ENCODE measurements at regions of chr5 and their contacts with region 1.

Region 1: GRCh38 chr5:158174918-158175851 is 316.2 kb upstream of the CLINT1 start:
- DNase-seq: peak; percentile 81 to 85
- ATAC-seq: peak; percentile 87
- H3K4me3 ChIP-seq: no peak overlapping the region
- H3K27ac ChIP-seq: no peak overlapping the region
- H3K4me1 ChIP-seq: no peaks in the 10 kb centered on the region
- H3K27me3 ChIP-seq: no peaks in the 10 kb centered on the region

Region 2: GRCh38 chr5:158268286-158268685 is 93.1 kb after region 1 on chr5:
- intact Hi-C with region 1: no loop called
- DNase-seq: no peak
- ATAC-seq: no peak
- H3K4me3 ChIP-seq: no peak overlapping the region
- H3K27ac ChIP-seq: no peak overlapping the region
- H3K4me1 ChIP-seq: no peaks in the 10 kb centered on the region
- H3K27me3 ChIP-seq: no peaks in the 10 kb centered on the region

Region 3: DNA sequence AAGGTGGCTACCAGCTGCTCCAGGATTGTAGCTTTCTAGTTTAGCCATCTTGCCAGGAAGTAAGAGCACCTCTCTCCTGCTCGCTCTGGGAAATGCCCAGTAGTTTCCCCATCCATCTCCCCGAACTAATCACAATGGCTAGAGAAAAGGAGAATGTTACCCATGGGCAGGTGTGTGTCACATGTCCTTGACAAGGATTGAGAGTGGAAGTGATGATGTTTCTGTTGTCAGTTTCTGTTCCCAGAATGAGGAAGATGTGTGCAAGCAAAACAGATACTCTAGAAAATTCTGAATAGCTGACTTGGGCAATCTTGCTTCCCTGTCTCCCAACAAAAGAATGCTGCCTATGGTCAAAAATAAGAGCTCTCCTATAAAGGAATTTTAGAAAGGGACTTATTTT is 495.0 kb after region 1 on chr5:
- intact Hi-C with region 1: loop called in 1 of 2 experiments (anchors 5 kb)
- DNase-seq: no peak
- ATAC-seq: no peak
- H3K4me3 ChIP-seq: no peak overlapping the region
- H3K27ac ChIP-seq: no peak overlapping the region
- H3K4me1 ChIP-seq: no peaks in the 10 kb centered on the region
- H3K27me3 ChIP-seq: no peaks in the 10 kb centered on the region

Region 4: DNA sequence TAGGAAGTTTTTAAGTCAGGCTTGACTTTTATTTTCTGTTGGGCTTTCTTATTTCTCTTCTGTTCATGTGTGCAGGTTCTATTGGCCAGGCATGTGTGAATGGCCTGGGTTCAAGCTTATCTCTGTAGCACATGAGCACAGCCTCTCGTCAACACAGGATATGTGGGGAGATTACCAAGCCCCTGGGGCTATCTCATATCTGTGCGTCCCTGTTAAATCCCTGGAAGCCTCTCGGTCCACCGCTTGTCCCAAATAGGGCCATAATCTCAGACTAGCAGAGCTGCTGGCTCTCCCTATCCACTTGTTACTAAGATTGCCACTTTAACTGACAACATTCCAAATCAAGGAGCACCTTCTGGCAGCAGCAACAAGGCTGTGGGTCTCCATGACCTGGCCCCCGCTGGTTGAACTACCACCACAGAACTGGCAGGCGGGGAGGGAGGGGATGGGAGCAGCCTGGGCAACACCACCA is 952.9 kb after region 1 on chr5:
- intact Hi-C with region 1: loop called (anchors 5 kb)
- DNase-seq: no peak
- ATAC-seq: no peak
- H3K4me3 ChIP-seq: no peak overlapping the region
- H3K27ac ChIP-seq: no peak overlapping the region
- H3K4me1 ChIP-seq: no peaks in the 10 kb centered on the region
- H3K27me3 ChIP-seq: no peaks in the 10 kb centered on the region